Panc1 (cell line): ENCODE measurements at regions of chr1 and their contacts with region 1.

Region 1: GRCh38 chr1:85200870-85201339 is at the start of gene SYDE2:
- DNase-seq: no peak
- ATAC-seq: peak; percentile 93
- H3K4me3 ChIP-seq: peak within 1 kb of the TSS; percentile 78 to 81
- H3K27ac ChIP-seq: peak within 1 kb of the TSS; percentile 90
- H3K4me1 ChIP-seq: peaks cover 59% of the 10 kb centered on the region
- H3K27me3 ChIP-seq: no peaks in the 10 kb centered on the region
- CTCF ChIP-seq: no peak; the same call in 1 of the 2 replicates
- total RNA-seq, gene SYDE2: 18.2 TPM

Region 2: GRCh38 chr1:85027242-85027983 is 173.5 kb before region 1 on chr1:
- CTCF ChIA-PET with region 1: no interaction called
- POLR2A ChIA-PET with region 1: no interaction called
- in situ Hi-C with region 1: no loop called
- intact Hi-C with region 1: no loop called
- DNase-seq: peak; percentile 24
- ATAC-seq: peak; percentile 93
- H3K4me3 ChIP-seq: no peak overlapping the region
- H3K27ac ChIP-seq: no peak overlapping the region
- H3K4me1 ChIP-seq: no peaks in the 10 kb centered on the region
- H3K27me3 ChIP-seq: no peaks in the 10 kb centered on the region
- CTCF ChIP-seq: peak; percentile 60

Region 3: GRCh38 chr1:85214657-85215056 is 13.8 kb after region 1 on chr1:
- CTCF ChIA-PET with region 1: no interaction called
- POLR2A ChIA-PET with region 1: no interaction called
- in situ Hi-C with region 1: no loop called
- intact Hi-C with region 1: loop called (anchors 2 kb)
- DNase-seq: no peak
- ATAC-seq: peak; percentile 60; the same call in 1 of the 2 replicates
- H3K4me3 ChIP-seq: no peak overlapping the region
- H3K27ac ChIP-seq: peak overlapping the region; percentile 40
- H3K4me1 ChIP-seq: peaks cover 18% of the 10 kb centered on the region
- H3K27me3 ChIP-seq: no peaks in the 10 kb centered on the region
- CTCF ChIP-seq: no peak